Endothelial cell of umbilical vein (primary cell): ENCODE measurements at regions of chr9 and their contacts with region 1.

Region 1: GRCh38 chr9:108468402-108468801 is 387.4 kb downstream of the ACTL7B start:
- DNase-seq: peak; percentile 36
- H3K4me3 ChIP-seq: no peak overlapping the region
- H3K27ac ChIP-seq: no peak overlapping the region
- H3K4me1 ChIP-seq: peaks cover 9% of the 10 kb centered on the region
- H3K27me3 ChIP-seq: no peaks in the 10 kb centered on the region
- CTCF ChIP-seq: peak; percentile 62 to 63
- POLR2A ChIP-seq: no peak

Region 2: DNA sequence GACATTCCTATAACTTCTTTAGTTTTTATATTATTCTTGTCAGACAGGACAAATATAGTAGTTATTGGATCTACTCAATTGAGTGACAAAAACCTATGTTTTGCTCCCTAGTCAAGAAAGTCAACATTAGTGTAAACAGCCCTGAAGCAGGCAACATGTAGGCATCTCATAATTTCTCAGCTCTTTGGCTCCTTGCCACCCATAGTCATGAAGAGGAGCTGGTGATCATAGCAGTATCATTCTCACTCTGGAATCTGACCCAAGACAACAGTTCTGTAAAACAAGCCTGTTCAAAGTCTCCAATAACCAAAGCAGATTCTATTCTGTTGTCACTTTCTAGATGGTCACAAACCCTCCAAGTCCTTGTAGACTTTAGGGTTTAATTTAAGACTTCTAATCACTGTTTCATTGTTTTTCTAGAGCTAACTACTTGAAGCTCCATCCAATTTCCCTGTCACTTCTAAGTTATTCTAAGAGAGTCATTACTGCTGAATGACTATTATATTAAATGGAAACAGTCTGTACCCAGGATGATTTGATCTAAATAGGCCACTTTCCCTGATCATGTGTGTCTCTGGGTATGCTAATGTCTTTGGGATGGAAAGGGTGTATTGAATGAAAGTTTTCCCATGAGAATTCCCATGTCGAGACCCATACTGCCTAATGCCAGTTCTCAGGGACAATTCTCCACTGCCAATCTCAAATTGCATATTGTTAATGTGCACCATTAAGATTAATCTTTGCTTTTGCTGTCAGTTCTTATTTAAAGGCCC is 145.9 kb before region 1 on chr9:
- CTCF ChIA-PET with region 1: no interaction called
- POLR2A ChIA-PET with region 1: no interaction called
- dilution Hi-C with region 1: no loop called
- intact Hi-C with region 1: no loop called
- DNase-seq: no peak
- H3K4me3 ChIP-seq: no peak overlapping the region
- H3K27ac ChIP-seq: no peak overlapping the region
- H3K4me1 ChIP-seq: no peaks in the 10 kb centered on the region
- H3K27me3 ChIP-seq: no peaks in the 10 kb centered on the region
- CTCF ChIP-seq: no peak
- POLR2A ChIP-seq: no peak

Region 3: DNA sequence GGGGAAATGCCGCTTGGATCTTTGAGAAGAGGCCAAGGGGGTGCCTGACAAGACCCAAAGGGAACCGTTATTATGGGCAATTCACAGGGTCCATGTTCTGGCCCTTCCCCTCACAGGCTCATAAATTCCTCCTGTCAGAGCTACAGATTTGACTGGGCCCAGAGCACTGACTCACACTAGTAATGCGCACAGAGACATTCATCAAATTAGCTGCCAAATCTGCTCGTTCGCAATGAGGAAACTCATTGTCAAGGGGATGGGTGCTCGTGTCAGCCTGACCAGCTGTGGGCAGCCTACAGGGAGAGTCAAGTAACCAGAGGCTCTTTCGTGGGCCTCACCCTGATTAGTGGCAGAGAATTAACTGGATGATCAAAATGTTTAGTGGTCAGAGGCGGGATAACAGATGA is 10.0 kb after region 1 on chr9:
- CTCF ChIA-PET with region 1: interaction called, 10 read pairs
- POLR2A ChIA-PET with region 1: no interaction called
- dilution Hi-C with region 1: no loop called
- intact Hi-C with region 1: no loop called
- DNase-seq: peak; percentile 77
- H3K4me3 ChIP-seq: no peak overlapping the region
- H3K27ac ChIP-seq: peak overlapping the region; percentile 73
- H3K4me1 ChIP-seq: peaks cover 28% of the 10 kb centered on the region
- H3K27me3 ChIP-seq: no peaks in the 10 kb centered on the region
- CTCF ChIP-seq: no peak
- POLR2A ChIP-seq: no peak

Region 4: DNA sequence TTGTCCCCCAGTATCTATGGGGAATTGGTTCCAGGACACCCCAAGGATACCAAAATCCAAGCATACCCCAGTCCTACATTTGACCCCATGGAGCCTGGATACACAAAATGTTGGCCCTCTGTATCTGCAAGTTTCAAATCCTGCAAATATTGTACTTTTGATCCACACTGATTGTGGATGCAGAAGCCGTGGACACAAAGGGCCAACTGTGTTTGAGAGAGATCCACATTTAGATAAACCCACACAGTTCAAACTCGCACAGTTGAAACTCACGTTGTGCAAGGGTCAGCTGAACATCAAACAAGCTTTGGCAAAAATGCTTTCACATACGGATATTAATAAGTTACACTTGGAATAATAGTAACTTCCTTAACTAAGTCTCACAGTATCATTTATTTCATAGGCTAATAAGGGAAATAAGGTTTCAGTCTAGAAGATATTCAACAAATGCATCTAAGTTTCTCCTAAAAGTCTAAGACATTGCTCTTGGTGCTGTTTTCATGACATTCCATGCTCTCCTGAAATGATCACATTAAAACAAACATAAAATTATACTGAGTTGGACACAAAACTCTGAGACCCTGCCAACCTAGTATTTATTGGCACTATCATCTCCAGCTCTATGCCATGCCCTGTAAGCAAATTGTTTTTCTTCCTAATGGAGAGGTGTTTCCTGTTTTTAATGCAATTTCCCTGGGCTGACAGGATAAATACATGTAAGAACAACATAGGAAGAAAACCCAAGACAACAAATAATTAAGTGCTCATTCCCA is 426.0 kb after region 1 on chr9:
- CTCF ChIA-PET with region 1: no interaction called
- POLR2A ChIA-PET with region 1: no interaction called
- dilution Hi-C with region 1: no loop called
- intact Hi-C with region 1: no loop called
- DNase-seq: peak; percentile 9
- H3K4me3 ChIP-seq: no peak overlapping the region
- H3K27ac ChIP-seq: no peak overlapping the region
- H3K4me1 ChIP-seq: no peaks in the 10 kb centered on the region
- H3K27me3 ChIP-seq: no peaks in the 10 kb centered on the region
- CTCF ChIP-seq: no peak
- POLR2A ChIP-seq: no peak